ENCODE measurements at regions of chr2 and their contacts with region 1.

Region 1: GRCh38 chr2:152025678-152026287 is 73.1 kb downstream of the CACNB4 start:
- ATAC-seq: peak; percentile 83 to 99 (median 99)
- H3K4me3 ChIP-seq: peak overlapping the region; percentile 24 to 41 (median 36)
- H3K27ac ChIP-seq: no peak overlapping the region
- H3K4me1 ChIP-seq: no peaks in the 10 kb centered on the region

Region 2: GRCh38 chr2:151491496-151491895 is 534.3 kb before region 1 on chr2:
- in situ Hi-C with region 1: no loop called
- ATAC-seq: no peak
- H3K4me3 ChIP-seq: no peak overlapping the region
- H3K27ac ChIP-seq: no peak overlapping the region
- H3K4me1 ChIP-seq: no peaks in the 10 kb centered on the region

Region 3: GRCh38 chr2:152134488-152135280 is 108.9 kb after region 1 on chr2:
- in situ Hi-C with region 1: loop called in 1 of 9 experiments (anchors 25 kb)
- ATAC-seq: no peak
- H3K4me3 ChIP-seq: no peak overlapping the region
- H3K27ac ChIP-seq: no peak overlapping the region
- H3K4me1 ChIP-seq: no peaks in the 10 kb centered on the region

Region 4: DNA sequence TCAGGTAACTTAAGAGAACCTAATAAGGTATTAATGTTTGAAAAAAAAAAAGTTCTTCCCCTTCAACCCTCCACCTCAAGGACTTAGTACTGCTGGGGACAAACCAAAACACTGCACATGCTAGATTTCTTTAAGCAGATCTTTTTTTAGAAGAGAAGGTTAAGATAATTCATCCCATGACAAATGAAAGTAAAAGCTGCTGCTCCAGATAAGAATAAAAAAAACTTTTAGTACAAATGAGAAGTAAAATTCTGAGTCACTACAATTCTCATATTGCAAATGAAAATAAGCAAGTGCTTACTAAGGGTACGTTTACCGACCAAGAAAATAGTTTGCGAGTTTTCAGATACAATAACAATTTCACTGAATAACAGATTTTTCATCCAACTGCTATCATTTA is 140.8 kb after region 1 on chr2:
- in situ Hi-C with region 1: loop called in 2 of 9 experiments (anchors 25 kb)
- ATAC-seq: peak in 1 of 8 experiments; percentile 46
- H3K4me3 ChIP-seq: no peak overlapping the region
- H3K27ac ChIP-seq: no peak overlapping the region
- H3K4me1 ChIP-seq: no peaks in the 10 kb centered on the region

Measured in motor neuron (in vitro differentiated cells).